Activated B cell treated with CpG ODN at 0.5 μM for 24 hours (primary cell): ENCODE measurements at regions of chr2 and their contacts with region 1.

Region 1: GRCh38 chr2:63841254-63842022 is at the start of gene UGP2:
- DNase-seq: peak; percentile 75
- ATAC-seq: peak; percentile 68
- H3K4me3 Mint-ChIP-seq: peak within 1 kb of the TSS; percentile 97
- H3K27ac Mint-ChIP-seq: peak within 1 kb of the TSS; percentile 97
- H3K4me1 Mint-ChIP-seq: peaks cover 53% of the 10 kb centered on the region
- H3K27me3 Mint-ChIP-seq: peaks cover 1% of the 10 kb centered on the region
- CTCF ChIP-seq: no peak
- total RNA-seq, gene UGP2: 69.8 and 73.5 TPM in 2 replicates

Region 2: GRCh38 chr2:62705007-62705829 is 1136.2 kb before region 1 on chr2 and contains the start of gene EHBP1:
- CTCF ChIA-PET with region 1: no interaction called
- POLR2A ChIA-PET with region 1: interaction called, 3 read pairs
- intact Hi-C with region 1: loop called (anchors 1 kb)
- DNase-seq: peak; percentile 98
- ATAC-seq: peak; percentile 93
- H3K4me3 Mint-ChIP-seq: peak within 1 kb of the TSS; percentile 95
- H3K27ac Mint-ChIP-seq: peak within 1 kb of the TSS; percentile 78
- H3K4me1 Mint-ChIP-seq: peaks cover 34% of the 10 kb centered on the region
- H3K27me3 Mint-ChIP-seq: no peaks in the 10 kb centered on the region
- CTCF ChIP-seq: no peak
- total RNA-seq, gene EHBP1: 24.0 and 25.0 TPM in 2 replicates

Region 3: GRCh38 chr2:63654959-63655358 is 186.5 kb before region 1 on chr2:
- CTCF ChIA-PET with region 1: no interaction called
- POLR2A ChIA-PET with region 1: no interaction called
- intact Hi-C with region 1: no loop called
- DNase-seq: no peak
- ATAC-seq: no peak
- H3K4me3 Mint-ChIP-seq: no peak overlapping the region
- H3K27ac Mint-ChIP-seq: no peak overlapping the region
- H3K4me1 Mint-ChIP-seq: no peaks in the 10 kb centered on the region
- H3K27me3 Mint-ChIP-seq: no peaks in the 10 kb centered on the region
- CTCF ChIP-seq: no peak

Region 4: GRCh38 chr2:63856303-63856603 is 14.8 kb after region 1 on chr2:
- CTCF ChIA-PET with region 1: interaction called, 12 read pairs
- POLR2A ChIA-PET with region 1: interaction called, 21 read pairs
- intact Hi-C with region 1: loop called (anchors 1 kb)
- DNase-seq: no peak
- ATAC-seq: no peak
- H3K4me3 Mint-ChIP-seq: no peak overlapping the region
- H3K27ac Mint-ChIP-seq: peak overlapping the region; percentile 30
- H3K4me1 Mint-ChIP-seq: peaks cover 43% of the 10 kb centered on the region
- H3K27me3 Mint-ChIP-seq: no peaks in the 10 kb centered on the region
- CTCF ChIP-seq: no peak

Region 5: GRCh38 chr2:63875559-63876245 is 34.3 kb after region 1 on chr2:
- CTCF ChIA-PET with region 1: no interaction called
- POLR2A ChIA-PET with region 1: interaction called, 13 read pairs
- intact Hi-C with region 1: no loop called
- DNase-seq: no peak
- ATAC-seq: no peak
- H3K4me3 Mint-ChIP-seq: no peak overlapping the region
- H3K27ac Mint-ChIP-seq: no peak overlapping the region
- H3K4me1 Mint-ChIP-seq: peaks cover 2% of the 10 kb centered on the region
- H3K27me3 Mint-ChIP-seq: no peaks in the 10 kb centered on the region
- CTCF ChIP-seq: no peak

Region 6: DNA sequence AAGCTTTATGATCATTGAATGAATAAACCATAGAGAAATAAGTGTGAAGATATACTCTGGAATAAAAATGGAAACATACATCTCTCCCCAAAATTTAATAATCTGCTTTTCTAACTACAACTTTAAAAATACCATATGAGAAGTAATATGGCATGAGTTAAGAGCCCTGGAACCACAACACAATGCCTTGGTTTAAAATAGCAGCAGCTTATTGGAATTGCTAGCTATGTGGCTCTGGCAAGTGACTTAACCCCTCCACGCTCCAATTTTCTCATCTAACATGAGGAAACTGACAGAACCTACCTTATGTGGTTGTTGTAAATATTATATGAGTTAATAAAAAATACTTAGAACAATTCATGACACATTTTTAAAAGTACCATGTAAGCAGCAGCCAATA is 101.3 kb after region 1 on chr2:
- CTCF ChIA-PET with region 1: no interaction called
- POLR2A ChIA-PET with region 1: no interaction called
- intact Hi-C with region 1: no loop called
- DNase-seq: no peak
- ATAC-seq: no peak
- H3K4me3 Mint-ChIP-seq: no peak overlapping the region
- H3K27ac Mint-ChIP-seq: no peak overlapping the region
- H3K4me1 Mint-ChIP-seq: no peaks in the 10 kb centered on the region
- H3K27me3 Mint-ChIP-seq: no peaks in the 10 kb centered on the region
- CTCF ChIP-seq: no peak

Region 7: GRCh38 chr2:64018923-64019718 is 177.7 kb after region 1 on chr2 and contains the start of gene VPS54:
- CTCF ChIA-PET with region 1: no interaction called
- POLR2A ChIA-PET with region 1: no interaction called
- intact Hi-C with region 1: loop called (anchors 2 kb)
- DNase-seq: peak; percentile 66
- ATAC-seq: peak; percentile 80
- H3K4me3 Mint-ChIP-seq: peak within 1 kb of the TSS; percentile 97
- H3K27ac Mint-ChIP-seq: peak within 1 kb of the TSS; percentile 92
- H3K4me1 Mint-ChIP-seq: peaks cover 34% of the 10 kb centered on the region
- H3K27me3 Mint-ChIP-seq: no peaks in the 10 kb centered on the region
- CTCF ChIP-seq: no peak
- total RNA-seq, gene VPS54: 11.5 and 13.1 TPM in 2 replicates

Region 8: DNA sequence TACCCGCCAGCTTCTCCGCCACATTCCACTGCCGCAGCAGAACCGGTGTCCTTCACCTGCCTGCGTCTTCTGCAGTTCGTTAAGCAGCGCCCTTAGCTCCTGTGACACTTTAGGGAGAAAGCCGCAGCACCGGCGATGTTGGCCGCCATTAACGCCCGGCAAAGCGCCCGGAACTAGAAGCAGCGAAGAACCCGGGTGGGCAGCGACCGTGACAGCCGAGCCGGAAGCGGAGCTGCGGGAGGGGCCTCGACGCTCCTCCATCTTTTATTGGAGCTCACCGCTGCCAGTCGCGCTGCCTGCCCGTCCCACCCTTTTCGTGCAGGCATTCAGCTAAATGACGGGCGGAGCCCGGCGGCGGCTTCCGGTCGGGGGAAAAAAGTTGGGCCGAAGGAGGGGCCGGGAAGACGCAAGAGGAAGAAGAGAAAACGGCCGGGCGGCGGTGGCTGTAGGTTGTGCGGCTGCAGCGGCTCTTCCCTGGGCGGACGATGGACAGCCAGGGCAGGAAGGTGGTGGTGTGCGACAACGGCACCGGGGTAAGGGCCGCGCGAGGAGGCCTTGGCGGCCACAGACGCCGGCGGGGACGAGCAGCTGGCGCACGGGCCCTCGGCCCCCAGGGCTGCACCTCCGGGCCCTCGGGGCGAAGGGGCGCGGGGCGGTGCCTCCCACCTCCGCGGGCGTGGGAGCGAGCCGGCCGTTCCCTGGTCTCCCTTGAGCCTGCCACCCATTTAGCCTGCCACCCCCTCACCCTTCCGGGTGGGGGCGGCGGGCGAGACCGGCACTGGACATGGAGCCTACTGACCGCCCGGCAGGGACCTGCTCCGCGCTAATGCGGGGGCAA is 1386.2 kb after region 1 on chr2 and contains the start of gene ACTR2:
- CTCF ChIA-PET with region 1: no interaction called
- POLR2A ChIA-PET with region 1: interaction called, 9 read pairs
- intact Hi-C with region 1: loop called (anchors 2 kb)
- DNase-seq: peak; percentile 88
- ATAC-seq: peak; percentile 90
- H3K4me3 Mint-ChIP-seq: peak within 1 kb of the TSS; percentile 99
- H3K27ac Mint-ChIP-seq: peak within 1 kb of the TSS; percentile 100
- H3K4me1 Mint-ChIP-seq: peaks cover 45% of the 10 kb centered on the region
- H3K27me3 Mint-ChIP-seq: no peaks in the 10 kb centered on the region
- CTCF ChIP-seq: no peak
- total RNA-seq, gene ACTR2: 484 and 493 TPM in 2 replicates